ENCODE measurements at regions of chr18 and their contacts with region 1.

Region 1: DNA sequence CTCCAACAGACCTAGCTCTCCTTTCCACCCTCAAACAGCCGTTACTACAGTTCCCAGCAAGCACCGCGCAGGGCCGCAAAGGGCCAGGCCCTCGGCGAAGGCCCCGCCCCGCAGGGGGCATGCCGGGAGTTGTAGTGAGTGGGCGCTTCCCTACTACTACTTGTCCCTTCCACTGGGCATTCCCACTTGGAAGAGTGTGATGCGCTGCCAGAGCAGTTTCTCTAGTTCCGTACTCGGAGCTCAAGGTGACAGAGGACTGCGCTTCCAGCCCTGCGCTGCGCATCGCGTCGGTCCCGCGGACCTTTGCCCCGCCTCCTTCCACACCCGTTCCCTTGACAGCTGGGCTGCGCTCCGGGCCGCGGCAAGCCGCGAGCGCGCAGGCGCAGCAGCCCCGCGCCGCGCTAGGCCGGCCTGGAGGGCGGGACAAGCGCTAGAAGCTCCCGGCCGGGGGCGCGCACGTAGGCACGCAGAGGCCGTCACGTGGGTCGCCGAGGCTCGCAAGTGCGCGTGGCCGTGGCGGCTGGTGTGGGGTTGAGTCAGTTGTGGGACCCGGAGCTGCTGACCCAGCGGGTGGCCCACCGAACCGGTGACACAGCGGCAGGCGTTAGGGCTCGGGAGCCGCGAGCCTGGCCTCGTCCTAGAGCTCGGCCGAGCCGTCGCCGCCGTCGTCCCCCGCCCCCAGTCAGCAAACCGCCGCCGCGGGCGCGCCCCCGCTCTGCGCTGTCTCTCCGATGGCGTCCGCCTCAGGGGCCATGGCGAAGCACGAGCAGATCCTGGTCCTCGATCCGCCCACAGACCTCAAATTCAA is at the start of gene VAPA:
- DNase-seq: peak; percentile 94 to 98 (median 96)
- H3K4me3 ChIP-seq: peak within 1 kb of the TSS; percentile 67 to 99 (median 92)
- H3K27ac ChIP-seq: peak within 1 kb of the TSS; percentile 87 to 100 (median 98)
- H3K27me3 ChIP-seq: no peaks in the 10 kb centered on the region
- CTCF ChIP-seq: peak in 20 of 56 donors; percentile 2 to 50 (median 16)
- total RNA-seq, gene VAPA: 189 to 323 (median 265) TPM

Region 2: DNA sequence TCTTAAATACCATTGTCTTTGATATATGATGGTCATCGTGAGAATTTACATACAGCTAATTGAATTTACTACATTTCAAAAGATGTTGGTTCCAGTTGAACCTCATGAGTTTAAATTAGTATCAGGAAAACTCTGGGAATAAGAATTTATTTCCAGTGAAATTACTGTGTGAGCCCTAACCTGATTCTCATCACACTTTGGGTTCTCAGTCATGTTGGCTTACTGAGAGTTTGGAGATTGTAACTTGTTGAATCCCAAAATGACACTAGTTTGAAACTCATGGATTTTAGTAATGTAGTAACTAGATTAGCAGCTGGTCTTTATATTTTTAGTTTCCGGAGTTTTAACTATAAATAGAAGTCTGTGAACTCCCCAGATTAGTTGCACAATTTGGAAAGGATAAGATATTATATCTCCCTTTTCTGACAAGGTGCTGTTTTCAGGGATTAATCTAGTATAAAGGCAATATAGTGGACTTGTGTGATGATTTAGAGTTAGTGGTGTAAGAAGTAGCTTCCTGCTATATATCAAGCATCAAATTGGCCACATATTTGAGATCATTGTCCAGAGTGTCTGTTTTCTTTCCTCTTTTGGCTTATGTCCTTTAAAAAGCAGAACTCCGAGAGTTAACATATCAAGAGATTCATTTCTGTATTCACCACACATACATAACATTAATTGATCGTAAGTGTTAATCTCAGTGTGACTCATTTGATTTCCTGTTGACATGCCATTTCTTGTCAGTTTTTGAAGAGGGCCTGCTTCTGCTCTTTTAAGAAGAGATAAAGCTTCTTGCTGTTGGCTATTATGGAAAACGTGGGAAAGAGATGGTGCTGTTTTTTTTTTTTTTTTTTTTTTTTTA is 795.5 kb before region 1 on chr18:
- intact Hi-C with region 1: no loop called
- DNase-seq: no peak
- H3K4me3 ChIP-seq: peak overlapping the region in 2 of 59 donors; percentile 8 to 25
- H3K27ac ChIP-seq: peak overlapping the region in 50 of 59 donors; percentile 1 to 86 (median 50)
- H3K27me3 ChIP-seq: no peaks in the 10 kb centered on the region
- CTCF ChIP-seq: no peak

Region 3: DNA sequence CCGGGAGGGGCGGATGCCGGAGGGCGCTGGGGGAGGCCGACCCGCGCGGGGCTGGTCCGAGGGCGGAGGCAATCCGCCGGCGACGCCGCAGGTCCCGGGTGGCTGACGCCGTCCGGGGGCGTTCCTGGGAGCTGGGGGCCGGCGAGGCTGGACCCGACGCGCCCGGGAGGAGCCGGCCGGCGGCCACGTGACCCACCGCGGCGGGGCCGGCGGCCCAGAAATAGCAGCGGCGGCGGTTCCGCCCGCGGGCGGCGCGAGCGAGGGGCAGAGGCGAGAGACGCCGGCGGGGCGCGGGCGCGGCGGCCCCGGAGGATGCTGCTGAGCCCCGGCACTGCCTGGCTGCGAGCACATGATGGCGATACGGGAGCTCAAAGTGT is 205.7 kb before region 1 on chr18 and contains the start of gene RAB31:
- intact Hi-C with region 1: loop called (anchors 10 kb)
- DNase-seq: peak; percentile 30 to 86 (median 56)
- H3K4me3 ChIP-seq: peak within 1 kb of the TSS; percentile 62 to 86 (median 78)
- H3K27ac ChIP-seq: peak within 1 kb of the TSS; percentile 47 to 97 (median 89)
- H3K27me3 ChIP-seq: no peaks in the 10 kb centered on the region
- CTCF ChIP-seq: peak in 7 of 56 donors; percentile 2 to 44 (median 12)
- total RNA-seq, gene RAB31: 48.3 to 273 (median 87.7) TPM

Region 4: DNA sequence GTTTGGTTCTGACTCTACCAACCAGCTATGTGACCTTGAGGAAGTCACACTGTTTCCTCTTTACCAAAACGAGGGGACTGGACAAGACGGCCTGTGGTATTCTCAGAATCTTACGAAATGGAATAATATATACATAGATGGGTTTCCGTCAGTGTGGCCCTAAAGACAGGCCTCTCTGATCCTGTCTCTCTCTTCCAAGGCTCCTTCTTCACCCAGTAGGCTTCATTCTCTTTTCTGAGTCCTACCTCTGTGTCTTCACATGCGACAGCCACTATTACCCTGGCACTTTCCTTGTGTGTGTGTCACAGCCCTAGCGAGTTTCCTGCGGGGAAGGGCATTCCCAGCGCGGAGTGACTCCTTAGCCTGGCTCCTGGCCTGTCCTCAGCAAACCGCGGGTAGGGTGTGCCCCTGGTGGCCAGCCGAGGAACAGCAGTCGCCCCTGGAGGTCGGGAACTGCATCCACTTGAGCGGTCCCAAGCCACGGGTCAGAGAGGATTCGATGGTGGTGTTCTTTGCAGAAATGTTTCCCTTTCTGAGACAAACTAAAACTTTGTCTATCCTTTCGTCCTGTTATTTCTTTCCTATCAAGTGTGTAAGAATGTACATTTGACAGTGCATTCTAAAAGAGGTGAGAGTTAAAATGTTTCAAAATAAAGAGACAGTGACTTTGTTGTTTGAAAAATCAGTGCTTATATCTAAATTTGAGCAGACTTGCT is 142.3 kb before region 1 on chr18:
- intact Hi-C with region 1: loop called in 1 of 2 experiments (anchors 5 kb)
- DNase-seq: peak; percentile 37 to 89 (median 83)
- H3K4me3 ChIP-seq: peak overlapping the region in 28 of 59 donors; percentile 1 to 49 (median 15)
- H3K27ac ChIP-seq: peak overlapping the region in 38 of 59 donors; percentile 0 to 85 (median 50)
- H3K27me3 ChIP-seq: no peaks in the 10 kb centered on the region
- CTCF ChIP-seq: peak; percentile 64 to 99 (median 96)

Region 5: DNA sequence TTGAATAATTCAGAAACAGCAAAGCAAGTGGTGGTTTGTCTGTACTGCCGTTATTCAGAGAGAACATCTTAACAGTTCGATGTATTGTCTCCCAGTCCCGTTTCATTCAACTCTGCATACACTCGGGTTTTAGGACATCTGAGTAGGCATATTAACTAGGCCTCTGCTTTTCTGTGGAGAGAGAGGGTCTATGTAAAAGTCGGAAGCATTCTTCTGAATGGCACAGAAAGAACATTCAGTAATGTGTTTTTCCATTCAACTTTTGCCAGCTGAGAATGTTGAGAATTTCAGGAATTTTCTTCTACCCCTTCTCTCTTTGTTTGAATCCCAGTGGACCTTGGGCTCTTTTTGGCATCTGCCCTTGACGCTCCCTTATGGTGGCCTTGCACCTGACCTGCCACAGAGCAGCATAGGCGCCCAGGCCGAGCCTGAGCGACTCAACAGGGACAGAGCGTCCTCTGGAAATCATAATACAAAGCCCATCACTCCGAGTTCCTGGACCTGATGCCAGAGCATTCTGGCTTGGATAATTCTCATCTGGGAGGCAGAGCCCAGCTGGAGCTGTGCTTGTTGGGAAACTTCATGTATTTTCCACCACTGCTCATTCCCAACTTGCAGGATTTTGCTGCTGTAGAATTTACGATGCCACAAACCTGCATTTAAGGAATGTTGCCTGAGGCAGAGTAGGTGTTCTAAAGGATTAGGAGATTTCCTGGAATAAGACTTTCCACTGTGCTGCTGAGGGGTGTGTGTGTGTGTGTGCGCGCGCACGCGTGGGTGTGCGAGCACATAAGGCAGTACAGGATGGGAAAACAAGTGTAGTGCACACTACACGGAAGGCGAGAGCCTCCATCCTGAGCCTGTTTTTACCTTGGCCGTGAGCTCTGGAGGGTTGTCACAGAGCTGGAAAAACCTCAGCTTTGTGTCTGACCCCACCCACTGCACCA is 105.2 kb before region 1 on chr18:
- intact Hi-C with region 1: loop called (anchors 10 kb)
- DNase-seq: peak in 4 of 10 donors; percentile 22 to 68 (median 63)
- H3K4me3 ChIP-seq: peak overlapping the region in 35 of 59 donors; percentile 0 to 49 (median 22)
- H3K27ac ChIP-seq: peak overlapping the region in 58 of 59 donors; percentile 46 to 93 (median 80)
- H3K27me3 ChIP-seq: no peaks in the 10 kb centered on the region
- CTCF ChIP-seq: peak in 3 of 56 donors; percentile 8 to 40 (median 13)

Region 6: DNA sequence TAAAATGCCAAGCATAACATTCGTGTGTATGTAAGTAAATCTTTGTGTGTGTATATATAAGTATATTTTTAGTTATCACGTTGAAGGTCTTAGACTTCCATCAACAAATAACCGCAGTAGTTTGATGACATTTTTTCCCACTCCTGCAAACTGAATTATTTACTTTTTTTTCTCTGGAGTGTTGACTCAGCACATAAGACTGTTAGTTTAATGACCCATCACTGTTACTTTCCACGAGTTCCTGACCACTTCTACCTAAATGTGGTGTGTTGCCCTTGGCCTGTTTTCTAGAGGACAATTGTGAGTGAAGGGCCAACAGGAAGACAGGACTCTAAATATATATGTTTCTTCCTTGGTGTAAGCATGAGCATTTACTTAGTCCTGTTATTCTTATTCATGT is 99.3 kb before region 1 on chr18:
- intact Hi-C with region 1: loop called (anchors 10 kb)
- DNase-seq: no peak
- H3K4me3 ChIP-seq: no peak overlapping the region
- H3K27ac ChIP-seq: no peak overlapping the region
- H3K27me3 ChIP-seq: no peaks in the 10 kb centered on the region
- CTCF ChIP-seq: no peak

Region 7: DNA sequence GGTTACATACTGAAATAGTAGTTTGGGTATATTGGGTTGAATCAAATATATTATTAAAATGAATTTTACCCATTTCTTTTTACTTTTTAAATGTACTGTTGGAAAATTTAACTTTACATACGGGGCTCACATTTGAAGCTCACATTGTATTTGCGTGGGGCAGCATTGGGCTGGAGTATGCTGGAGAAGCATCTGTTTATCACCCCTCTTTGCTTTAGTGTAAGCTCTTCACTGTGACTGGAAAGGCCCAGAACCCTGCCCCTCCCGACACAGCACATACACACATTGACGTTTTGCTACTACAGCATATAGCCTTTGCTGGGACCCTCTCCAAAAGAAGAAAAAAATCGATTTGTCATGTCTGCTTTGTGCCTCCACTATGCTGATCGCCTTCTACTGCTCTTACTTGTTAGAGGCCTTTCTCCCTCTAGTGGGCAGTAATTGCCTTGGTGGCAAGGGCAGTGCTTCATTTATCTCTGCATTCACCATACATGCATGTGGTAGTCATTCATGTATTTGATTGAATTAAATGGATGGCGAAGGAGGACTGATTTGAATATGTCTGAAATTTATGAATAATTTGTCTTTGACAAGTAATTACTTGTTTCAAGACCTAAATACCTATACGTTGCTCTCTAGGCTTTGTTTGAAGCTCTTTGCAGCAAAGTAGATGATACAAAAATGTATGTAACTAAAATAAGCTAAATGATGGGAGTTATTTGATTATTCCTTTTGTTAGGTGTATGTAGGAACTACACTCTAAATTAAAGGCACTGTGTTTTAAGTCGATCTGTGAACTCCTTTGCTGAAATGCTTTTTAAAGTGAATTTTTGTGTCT is 37.5 kb after region 1 on chr18:
- intact Hi-C with region 1: loop called (anchors 2 to 5 kb)
- DNase-seq: peak in 2 of 10 donors; percentile 62 to 66
- H3K4me3 ChIP-seq: no peak overlapping the region
- H3K27ac ChIP-seq: peak overlapping the region in 24 of 59 donors; percentile 0 to 65 (median 20)
- H3K27me3 ChIP-seq: no peaks in the 10 kb centered on the region
- CTCF ChIP-seq: peak; percentile 28 to 86 (median 68)

Measured in dorsolateral prefrontal cortex (tissue), 120 donors.